ENCODE measurements at regions of chr1 and their contacts with region 1.

Region 1: DNA sequence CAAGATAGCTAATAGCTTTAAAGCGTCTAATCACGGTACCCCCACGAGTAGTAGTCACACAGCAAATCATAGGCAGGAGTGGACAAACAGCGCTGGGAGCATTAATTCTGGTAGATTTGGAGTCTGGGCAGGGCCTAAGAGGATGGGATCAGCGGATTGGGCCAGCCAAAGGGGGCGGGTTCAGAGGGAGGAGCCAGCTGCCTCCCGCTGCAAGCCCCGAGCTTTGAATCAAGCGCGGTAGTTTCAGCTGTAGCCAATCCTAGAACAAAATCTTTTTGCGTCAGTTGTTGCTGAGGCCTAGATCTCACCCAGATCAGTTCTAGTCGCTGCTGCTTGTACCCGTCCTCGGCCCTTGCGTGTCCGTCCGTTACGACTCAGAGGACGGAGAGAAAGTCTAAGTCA is 576 bp upstream of the NASP start:
- DNase-seq: peak; percentile 96
- ATAC-seq: peak; percentile 83
- H3K4me3 Mint-ChIP-seq: peak overlapping the region; percentile 96
- H3K27ac Mint-ChIP-seq: peak overlapping the region; percentile 99
- H3K4me1 Mint-ChIP-seq: peaks cover 20% of the 10 kb centered on the region
- H3K27me3 Mint-ChIP-seq: no peaks in the 10 kb centered on the region
- CTCF ChIP-seq: no peak

Region 2: DNA sequence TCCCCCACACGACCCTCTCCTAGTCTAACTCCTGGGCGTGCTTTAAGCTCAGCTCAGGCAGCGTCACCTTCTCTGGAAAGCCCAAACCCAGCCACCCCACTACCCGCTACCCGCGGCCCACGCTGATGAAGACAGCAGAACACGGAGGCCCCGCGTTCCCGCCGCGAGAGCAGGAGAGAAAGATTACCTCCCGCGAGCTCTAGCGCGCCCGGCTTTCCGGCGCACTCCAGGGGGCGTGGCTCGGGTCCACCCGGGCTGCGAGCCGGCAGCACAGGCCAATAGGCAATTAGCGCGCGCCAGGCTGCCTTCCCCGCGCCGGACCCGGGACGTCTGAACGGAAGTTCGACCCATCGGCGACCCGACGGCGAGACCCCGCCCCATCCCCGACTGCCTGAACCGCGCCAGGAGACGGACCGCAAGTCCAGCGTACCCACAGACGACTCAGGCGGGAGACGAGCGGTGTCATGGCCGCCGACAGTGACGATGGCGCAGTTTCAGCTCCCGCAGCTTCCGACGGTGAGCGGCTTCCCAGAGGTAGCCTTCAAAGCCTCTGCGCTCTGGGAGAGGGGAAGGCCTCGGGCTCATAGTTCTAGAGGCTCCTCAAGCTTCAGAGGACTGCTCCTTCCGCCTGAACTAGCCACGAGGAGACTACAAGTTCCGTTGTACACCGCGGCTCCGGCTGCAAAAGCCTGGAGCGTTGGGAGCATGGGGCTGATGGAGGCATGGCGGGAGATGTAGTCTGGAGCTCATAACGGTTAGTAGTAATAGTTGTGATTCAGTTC is 243.3 kb before region 1 on chr1 and contains the starts of genes MUTYH and TOE1:
- CTCF ChIA-PET with region 1: interaction called, 5 read pairs
- POLR2A ChIA-PET with region 1: interaction called, 18 read pairs
- intact Hi-C with region 1: loop called (anchors 10 kb)
- DNase-seq: peak; percentile 97
- ATAC-seq: peak; percentile 87
- H3K4me3 Mint-ChIP-seq: peak within 1 kb of the TSS; percentile 99
- H3K27ac Mint-ChIP-seq: peak within 1 kb of the TSS; percentile 99
- H3K4me1 Mint-ChIP-seq: peaks cover 37% of the 10 kb centered on the region
- H3K27me3 Mint-ChIP-seq: no peaks in the 10 kb centered on the region
- CTCF ChIP-seq: no peak
- total RNA-seq, gene MUTYH: 51.4 to 54.5 TPM
- total RNA-seq, gene TOE1: 25.7 to 28.1 TPM

Region 3: DNA sequence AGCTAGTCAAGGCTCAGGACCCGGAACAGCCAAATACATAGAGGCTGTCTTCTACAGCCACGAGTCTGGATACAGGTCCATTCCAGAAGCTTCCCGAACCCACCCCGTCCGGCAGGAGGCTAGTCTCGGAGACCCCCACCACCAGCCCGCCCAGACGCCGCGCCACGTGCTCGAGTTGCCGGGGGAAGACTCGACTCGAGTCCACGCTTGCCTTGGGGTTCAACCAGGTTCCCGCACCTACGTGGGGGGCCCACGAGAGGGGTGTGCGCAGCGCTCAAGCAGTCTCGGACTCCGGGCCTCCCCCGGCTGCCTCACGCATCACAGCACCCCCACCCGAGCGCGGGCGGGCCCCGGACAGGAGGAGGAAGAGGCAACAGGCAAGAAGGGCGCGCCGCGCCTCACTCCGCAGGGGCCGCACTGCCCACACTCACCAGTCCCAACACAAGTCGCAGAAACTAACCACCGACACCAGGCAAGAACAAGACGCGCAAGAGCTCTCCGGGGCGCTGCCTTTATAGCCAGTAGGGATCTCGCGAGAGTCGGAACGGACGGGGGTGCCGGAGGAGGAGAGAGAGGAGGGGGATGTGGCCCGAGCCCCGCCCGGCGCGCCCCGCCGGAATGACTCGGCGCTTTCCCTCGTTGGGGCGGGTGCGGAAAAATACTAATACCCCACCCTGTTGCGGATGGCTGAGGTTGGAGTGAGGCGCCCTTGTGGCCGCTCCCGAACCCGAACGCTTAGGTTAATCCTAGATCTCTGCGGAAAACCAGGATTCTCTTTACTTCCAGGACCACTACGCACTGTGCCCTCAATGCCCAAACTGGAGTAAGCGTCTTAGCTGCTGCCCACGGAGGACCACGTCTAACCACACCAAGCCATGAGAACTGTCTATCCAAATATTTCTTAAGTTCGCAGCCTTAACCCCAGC is 61.6 kb before region 1 on chr1 and contains the start of gene PRDX1:
- CTCF ChIA-PET with region 1: no interaction called
- POLR2A ChIA-PET with region 1: interaction called, 53 read pairs
- intact Hi-C with region 1: loop called (anchors 5 kb)
- DNase-seq: peak; percentile 96
- ATAC-seq: peak; percentile 92
- H3K4me3 Mint-ChIP-seq: peak within 1 kb of the TSS; percentile 97
- H3K27ac Mint-ChIP-seq: peak within 1 kb of the TSS; percentile 95
- H3K4me1 Mint-ChIP-seq: peaks cover 38% of the 10 kb centered on the region
- H3K27me3 Mint-ChIP-seq: peaks cover 1% of the 10 kb centered on the region
- CTCF ChIP-seq: no peak
- total RNA-seq, gene PRDX1: 547 to 553 TPM

Region 4: GRCh38 chr1:45550401-45551351 is 32.6 kb before region 1 on chr1 and contains the start of gene AKR1A1:
- CTCF ChIA-PET with region 1: interaction called, 3 read pairs
- POLR2A ChIA-PET with region 1: interaction called, 25 read pairs
- intact Hi-C with region 1: no loop called
- DNase-seq: peak; percentile 93
- ATAC-seq: peak; percentile 94
- H3K4me3 Mint-ChIP-seq: peak within 1 kb of the TSS; percentile 100
- H3K27ac Mint-ChIP-seq: peak within 1 kb of the TSS; percentile 98
- H3K4me1 Mint-ChIP-seq: peaks cover 25% of the 10 kb centered on the region
- H3K27me3 Mint-ChIP-seq: peaks cover 1% of the 10 kb centered on the region
- CTCF ChIP-seq: no peak
- total RNA-seq, gene AKR1A1: 184 to 186 TPM

Region 5: DNA sequence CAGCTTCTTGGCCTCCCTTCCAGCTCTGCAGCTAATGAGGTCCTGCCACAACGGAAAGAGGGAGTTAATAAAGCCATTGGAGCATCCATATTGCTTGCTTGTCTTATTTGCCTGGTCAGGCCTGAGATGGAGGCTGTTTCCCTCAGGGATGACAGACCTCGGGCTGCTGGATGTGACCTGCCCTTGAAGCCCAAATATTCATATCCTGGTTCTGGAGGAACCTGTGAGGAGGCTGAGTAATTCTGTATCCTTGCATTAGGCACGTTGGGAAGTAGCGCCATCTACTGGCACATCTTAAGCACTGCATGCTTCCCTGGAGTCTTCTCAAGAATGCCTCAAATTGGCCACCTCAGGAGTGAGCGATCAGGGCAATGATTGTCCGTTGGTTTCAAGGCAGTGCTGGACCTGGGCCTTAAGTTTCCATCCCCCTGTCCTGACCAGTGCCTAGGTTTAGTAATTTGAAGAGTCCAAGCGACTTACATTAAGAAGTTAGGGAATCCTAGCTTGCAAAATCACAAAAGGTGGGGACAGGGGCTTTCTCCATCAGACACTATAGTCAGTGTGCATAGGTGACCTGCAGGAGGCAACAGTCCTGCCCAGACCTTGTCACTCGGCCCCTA is 13.2 kb before region 1 on chr1:
- CTCF ChIA-PET with region 1: interaction called, 68 read pairs
- POLR2A ChIA-PET with region 1: interaction called, 35 read pairs
- intact Hi-C with region 1: no loop called
- DNase-seq: peak; percentile 77
- ATAC-seq: peak; percentile 99
- H3K4me3 Mint-ChIP-seq: no peak overlapping the region
- H3K27ac Mint-ChIP-seq: no peak overlapping the region
- H3K4me1 Mint-ChIP-seq: no peaks in the 10 kb centered on the region
- H3K27me3 Mint-ChIP-seq: no peaks in the 10 kb centered on the region
- CTCF ChIP-seq: peak; percentile 94

Region 6: DNA sequence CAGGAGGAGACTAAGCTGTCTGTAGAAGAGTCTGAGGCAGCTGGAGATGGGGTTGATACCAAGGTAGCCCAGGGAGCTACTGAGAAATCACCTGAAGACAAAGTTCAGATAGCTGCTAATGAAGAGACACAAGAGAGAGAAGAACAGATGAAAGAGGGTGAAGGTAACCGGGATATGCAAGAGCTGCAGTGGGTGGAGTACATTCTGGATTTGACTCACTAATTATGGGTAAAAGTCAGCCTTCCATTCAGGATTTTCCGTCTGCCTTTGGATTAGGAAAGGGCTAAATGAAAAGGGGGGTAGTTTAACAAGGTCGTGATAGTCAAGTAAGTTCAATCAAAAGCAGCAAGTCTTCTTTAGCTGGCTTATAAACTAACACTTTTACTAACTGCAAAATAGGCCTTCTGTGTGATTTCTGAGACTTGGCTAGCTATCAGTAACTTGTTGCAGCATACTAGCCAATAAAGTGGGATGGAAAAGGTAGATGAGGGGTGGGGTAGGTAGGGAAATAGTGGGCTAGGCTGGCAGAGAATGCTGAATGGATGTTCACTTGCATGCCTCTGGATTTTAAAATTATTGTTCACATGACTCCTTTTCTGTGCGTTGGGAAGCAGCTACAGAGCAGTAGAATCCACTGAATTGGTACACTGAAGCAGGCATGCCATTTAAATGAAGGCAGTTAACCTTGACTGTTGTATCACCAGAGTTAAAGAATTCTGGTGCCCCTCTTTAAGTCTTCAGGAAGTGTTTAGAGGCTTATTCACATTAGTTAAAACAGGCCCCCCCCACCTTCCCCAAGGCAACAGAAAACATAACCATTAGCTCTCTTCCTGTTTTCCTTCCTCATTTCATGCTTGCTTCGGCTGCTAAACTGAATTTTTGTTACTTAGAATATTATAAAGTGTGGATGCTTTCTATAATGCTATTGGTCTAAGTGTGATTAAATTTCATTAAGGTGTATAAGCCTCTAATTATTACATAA is 25.2 kb after region 1 on chr1:
- CTCF ChIA-PET with region 1: no interaction called
- POLR2A ChIA-PET with region 1: interaction called, 15 read pairs
- intact Hi-C with region 1: no loop called
- DNase-seq: no peak
- ATAC-seq: no peak
- H3K4me3 Mint-ChIP-seq: no peak overlapping the region
- H3K27ac Mint-ChIP-seq: peak overlapping the region; percentile 13
- H3K4me1 Mint-ChIP-seq: peaks cover 18% of the 10 kb centered on the region
- H3K27me3 Mint-ChIP-seq: no peaks in the 10 kb centered on the region
- CTCF ChIP-seq: no peak

Region 7: DNA sequence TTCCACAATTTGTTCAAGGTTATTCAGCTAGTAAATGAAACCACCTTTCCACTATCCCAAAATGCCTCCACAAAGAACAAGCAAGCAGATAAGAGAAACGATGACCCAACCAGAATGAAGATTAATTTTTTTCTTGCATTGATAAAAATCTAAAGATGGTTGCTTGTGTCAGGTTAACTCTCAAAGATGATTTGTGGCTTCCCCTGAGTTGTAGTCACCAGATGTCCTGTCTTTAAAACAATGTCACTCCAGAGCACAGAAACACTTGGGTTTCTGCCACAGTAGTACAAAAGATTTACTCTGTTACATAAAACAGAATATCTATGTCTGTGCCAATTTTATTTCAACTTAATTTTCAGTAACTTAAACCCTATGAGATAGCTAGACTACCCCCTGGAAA is 51.9 kb after region 1 on chr1:
- CTCF ChIA-PET with region 1: no interaction called
- POLR2A ChIA-PET with region 1: no interaction called
- intact Hi-C with region 1: no loop called
- DNase-seq: no peak
- ATAC-seq: no peak
- H3K4me3 Mint-ChIP-seq: no peak overlapping the region
- H3K27ac Mint-ChIP-seq: no peak overlapping the region
- H3K4me1 Mint-ChIP-seq: no peaks in the 10 kb centered on the region
- H3K27me3 Mint-ChIP-seq: no peaks in the 10 kb centered on the region
- CTCF ChIP-seq: no peak

Measured in activated CD8-positive, alpha-beta T cell treated with anti-CD3 and anti-CD28 coated beads for 36 hours (primary cell).